Activated CD4-positive, alpha-beta T cell treated with anti-CD3 and anti-CD28 coated beads for 36 hours (primary cell): ENCODE measurements at regions of chr10 and their contacts with region 1.

Region 1: GRCh38 chr10:110864662-110865140 is 7.0 kb upstream of the PDCD4 start:
- DNase-seq: peak; percentile 65
- ATAC-seq: peak; percentile 78
- H3K4me3 Mint-ChIP-seq: peak overlapping the region; percentile 72
- H3K27ac Mint-ChIP-seq: peak overlapping the region; percentile 99
- H3K4me1 Mint-ChIP-seq: peaks cover 97% of the 10 kb centered on the region
- H3K27me3 Mint-ChIP-seq: no peaks in the 10 kb centered on the region

Region 2: GRCh38 chr10:110567201-110568054 is 297.3 kb before region 1 on chr10 and contains the start of gene SMC3:
- CTCF ChIA-PET with region 1: no interaction called
- POLR2A ChIA-PET with region 1: interaction called, 6 read pairs
- intact Hi-C with region 1: loop called in 1 of 2 experiments (anchors 5 kb)
- DNase-seq: peak; percentile 95
- ATAC-seq: peak; percentile 84
- H3K4me3 Mint-ChIP-seq: peak within 1 kb of the TSS; percentile 93
- H3K27ac Mint-ChIP-seq: peak within 1 kb of the TSS; percentile 99
- H3K4me1 Mint-ChIP-seq: peaks cover 35% of the 10 kb centered on the region
- H3K27me3 Mint-ChIP-seq: peaks cover 13% of the 10 kb centered on the region
- total RNA-seq, gene SMC3: 76.8 to 83.5 TPM

Region 3: DNA sequence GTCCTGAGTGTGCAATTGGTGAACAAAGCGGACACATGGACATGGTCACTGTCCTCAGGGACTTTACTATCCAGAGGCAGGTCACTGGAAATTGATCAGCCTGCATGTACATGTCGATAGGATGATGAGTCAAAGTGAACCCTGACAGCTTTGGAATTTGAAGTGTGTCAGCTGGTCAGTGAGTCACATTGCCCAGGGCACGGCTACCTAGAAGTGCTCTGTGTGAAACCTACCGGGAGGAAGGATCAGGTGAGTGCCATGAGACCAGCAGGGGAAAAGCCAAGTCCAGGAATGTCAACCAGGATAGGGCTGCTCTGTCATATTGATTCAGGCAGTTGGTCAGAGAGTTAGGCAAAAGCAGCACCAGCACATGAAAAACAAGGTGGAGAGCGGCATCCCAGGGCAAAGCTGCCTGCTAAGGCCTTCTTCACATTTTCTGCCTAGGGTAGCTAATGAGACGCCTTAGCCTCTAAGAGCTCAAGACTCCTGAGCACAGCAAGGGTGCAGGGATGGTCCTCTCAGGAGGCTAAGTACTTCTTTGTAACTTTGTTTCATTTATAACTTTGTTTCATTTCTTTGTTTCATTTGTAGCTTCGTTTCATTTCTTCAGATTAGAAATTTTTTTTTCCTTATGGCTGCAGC is 12.3 kb before region 1 on chr10:
- CTCF ChIA-PET with region 1: interaction called, 15 read pairs
- POLR2A ChIA-PET with region 1: interaction called, 6 read pairs
- intact Hi-C with region 1: no loop called
- DNase-seq: peak; percentile 73
- ATAC-seq: peak; percentile 86
- H3K4me3 Mint-ChIP-seq: peak overlapping the region; percentile 37
- H3K27ac Mint-ChIP-seq: peak overlapping the region; percentile 70
- H3K4me1 Mint-ChIP-seq: peaks cover 63% of the 10 kb centered on the region
- H3K27me3 Mint-ChIP-seq: no peaks in the 10 kb centered on the region